MCF 10A (cell line): ENCODE measurements at regions of chr1 and their contacts with region 1.

Region 1: GRCh38 chr1:208245185-208245705 is 1.1 kb upstream of the PLXNA2 start:
- DNase-seq: peak; percentile 98
- H3K4me3 Mint-ChIP-seq: peak overlapping the region; percentile 94
- H3K27ac Mint-ChIP-seq: no peak overlapping the region
- H3K4me1 Mint-ChIP-seq: peaks cover 26% of the 10 kb centered on the region
- H3K27me3 Mint-ChIP-seq: no peaks in the 10 kb centered on the region
- CTCF ChIP-seq: peak; percentile 94

Region 2: GRCh38 chr1:208007938-208008342 is 237.3 kb before region 1 on chr1:
- CTCF ChIA-PET with region 1: interaction called, 15 read pairs
- POLR2A ChIA-PET with region 1: interaction called, 8 read pairs
- intact Hi-C with region 1: no loop called
- DNase-seq: peak; percentile 82
- H3K4me3 Mint-ChIP-seq: no peak overlapping the region
- H3K27ac Mint-ChIP-seq: no peak overlapping the region
- H3K4me1 Mint-ChIP-seq: peaks cover 18% of the 10 kb centered on the region
- H3K27me3 Mint-ChIP-seq: no peaks in the 10 kb centered on the region
- CTCF ChIP-seq: no peak

Region 3: DNA sequence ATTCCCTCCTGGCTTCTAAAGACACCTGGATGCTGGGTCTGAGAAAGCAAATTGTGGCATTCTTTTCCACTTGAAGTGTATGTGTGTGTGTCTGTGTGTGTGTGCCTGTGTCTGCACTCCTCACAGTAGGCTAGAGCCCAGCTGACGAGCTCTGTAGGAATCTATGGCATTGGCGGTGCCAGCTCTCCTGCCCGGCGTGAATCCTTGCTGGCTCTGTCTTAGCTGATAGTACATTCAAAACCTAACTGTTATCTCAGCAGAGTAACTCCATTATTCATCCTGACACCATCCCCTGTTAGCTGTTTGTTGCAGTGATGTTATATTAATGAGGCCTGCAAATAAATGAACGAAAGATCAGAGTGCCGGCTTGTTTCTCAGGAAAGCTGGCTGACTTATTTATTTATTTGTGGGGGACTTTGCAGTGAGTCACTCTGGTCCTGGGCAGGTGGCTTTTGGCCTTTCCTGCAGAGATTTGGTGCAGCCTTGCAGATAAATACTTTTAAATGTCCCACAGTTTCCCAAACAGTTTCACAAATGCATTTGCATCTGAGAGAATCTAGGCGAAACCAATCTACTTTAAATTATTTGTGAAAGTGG is 173.7 kb before region 1 on chr1:
- CTCF ChIA-PET with region 1: interaction called, 18 read pairs
- POLR2A ChIA-PET with region 1: interaction called, 4 read pairs
- intact Hi-C with region 1: no loop called
- DNase-seq: no peak
- H3K4me3 Mint-ChIP-seq: no peak overlapping the region
- H3K27ac Mint-ChIP-seq: no peak overlapping the region
- H3K4me1 Mint-ChIP-seq: no peaks in the 10 kb centered on the region
- H3K27me3 Mint-ChIP-seq: no peaks in the 10 kb centered on the region
- CTCF ChIP-seq: no peak

Region 4: DNA sequence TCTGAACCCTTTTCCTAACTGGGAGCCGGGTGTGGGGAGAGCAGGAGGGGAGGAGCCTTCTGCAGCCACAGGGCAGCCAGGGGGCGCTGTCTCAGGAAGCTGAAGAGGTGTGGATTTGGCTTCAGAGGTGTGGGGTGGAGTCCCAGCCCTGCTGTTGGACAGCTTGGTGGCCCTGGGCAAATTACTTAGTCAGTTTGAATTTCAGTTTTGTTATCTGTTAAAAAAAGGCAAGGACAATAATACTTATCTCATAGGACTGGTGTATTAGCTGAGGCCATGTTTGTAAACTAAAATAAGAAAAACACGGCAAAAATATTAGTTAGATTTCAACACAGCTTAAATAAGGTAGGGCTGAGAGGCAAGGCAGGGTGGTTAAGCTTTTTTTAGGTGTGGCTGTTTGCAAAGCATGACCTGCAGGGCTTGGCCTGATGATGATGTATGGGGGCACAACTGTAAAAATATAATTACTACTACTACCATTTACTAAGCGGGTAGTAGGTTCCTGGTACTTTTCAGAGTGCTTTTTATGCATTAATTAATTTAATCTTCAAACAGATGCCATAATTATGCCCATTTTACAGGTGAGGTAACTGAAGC is 112.9 kb before region 1 on chr1:
- CTCF ChIA-PET with region 1: interaction called, 586 read pairs
- POLR2A ChIA-PET with region 1: interaction called, 84 read pairs
- intact Hi-C with region 1: loop called (anchors 1 kb)
- DNase-seq: peak; percentile 96
- H3K4me3 Mint-ChIP-seq: peak overlapping the region; percentile 12
- H3K27ac Mint-ChIP-seq: peak overlapping the region; percentile 74
- H3K4me1 Mint-ChIP-seq: peaks cover 31% of the 10 kb centered on the region
- H3K27me3 Mint-ChIP-seq: no peaks in the 10 kb centered on the region
- CTCF ChIP-seq: peak; percentile 99

Region 5: DNA sequence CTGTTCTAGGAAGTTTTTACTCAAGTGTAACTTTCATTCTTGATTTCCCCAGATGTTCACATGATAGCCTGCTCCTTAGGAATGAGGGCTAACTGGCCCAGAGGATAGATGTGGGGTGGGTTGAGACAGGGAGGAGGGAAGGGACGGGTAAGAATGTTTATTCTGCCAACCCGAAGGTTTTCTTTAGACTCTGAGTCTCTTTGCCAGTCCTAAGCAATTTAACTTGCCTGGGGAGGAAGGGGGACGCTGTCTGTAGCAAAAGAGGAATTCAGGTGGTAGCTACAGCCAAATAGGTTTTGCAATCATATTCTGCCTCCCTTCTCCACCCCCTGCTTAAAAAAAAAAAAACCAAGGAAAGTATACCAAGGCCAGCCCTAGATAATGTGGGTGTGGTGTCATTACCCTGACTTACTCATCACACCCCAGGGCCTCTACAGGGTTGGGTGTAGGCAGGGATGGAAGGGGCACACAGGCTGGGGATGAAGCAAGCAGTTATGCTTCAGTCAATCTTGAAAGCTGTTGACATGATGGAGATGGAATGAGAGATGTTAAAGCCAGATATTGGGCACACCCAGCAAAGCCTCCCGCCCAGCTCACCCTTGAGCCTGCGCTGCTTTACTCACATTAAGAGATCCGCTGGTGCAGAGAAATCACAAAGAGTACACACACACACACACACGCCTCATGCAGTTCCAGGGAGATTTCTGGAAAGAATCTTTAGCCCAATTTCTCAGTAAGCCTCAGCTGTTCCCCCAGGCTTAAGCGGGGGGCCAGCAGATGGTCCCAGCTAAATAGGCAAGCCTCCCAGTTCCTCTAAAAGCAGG is 60.9 kb before region 1 on chr1:
- CTCF ChIA-PET with region 1: interaction called, 1,037 read pairs
- POLR2A ChIA-PET with region 1: interaction called, 87 read pairs
- intact Hi-C with region 1: no loop called
- DNase-seq: peak; percentile 100
- H3K4me3 Mint-ChIP-seq: peak overlapping the region; percentile 58
- H3K27ac Mint-ChIP-seq: peak overlapping the region; percentile 78
- H3K4me1 Mint-ChIP-seq: peaks cover 61% of the 10 kb centered on the region
- H3K27me3 Mint-ChIP-seq: no peaks in the 10 kb centered on the region
- CTCF ChIP-seq: no peak

Region 6: DNA sequence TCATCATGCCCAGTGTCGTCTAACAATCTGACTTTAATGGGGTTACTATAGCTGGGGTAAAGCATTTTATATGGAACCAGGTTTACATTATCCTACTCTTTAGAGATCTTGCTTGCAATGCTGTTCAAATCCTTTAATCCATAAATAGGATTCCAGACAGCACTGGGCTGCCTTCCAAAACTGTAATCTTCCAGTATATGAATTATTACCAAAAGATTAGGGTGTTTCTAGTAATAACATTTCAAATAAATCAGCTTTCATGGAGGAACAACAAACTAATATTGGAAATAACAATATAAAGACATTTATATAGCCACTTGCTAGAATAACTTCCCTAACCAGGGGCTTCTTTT is 87.5 kb after region 1 on chr1:
- CTCF ChIA-PET with region 1: no interaction called
- POLR2A ChIA-PET with region 1: no interaction called
- intact Hi-C with region 1: no loop called
- DNase-seq: no peak
- H3K4me3 Mint-ChIP-seq: no peak overlapping the region
- H3K27ac Mint-ChIP-seq: no peak overlapping the region
- H3K4me1 Mint-ChIP-seq: no peaks in the 10 kb centered on the region
- H3K27me3 Mint-ChIP-seq: peaks cover 81% of the 10 kb centered on the region
- CTCF ChIP-seq: no peak

Region 7: DNA sequence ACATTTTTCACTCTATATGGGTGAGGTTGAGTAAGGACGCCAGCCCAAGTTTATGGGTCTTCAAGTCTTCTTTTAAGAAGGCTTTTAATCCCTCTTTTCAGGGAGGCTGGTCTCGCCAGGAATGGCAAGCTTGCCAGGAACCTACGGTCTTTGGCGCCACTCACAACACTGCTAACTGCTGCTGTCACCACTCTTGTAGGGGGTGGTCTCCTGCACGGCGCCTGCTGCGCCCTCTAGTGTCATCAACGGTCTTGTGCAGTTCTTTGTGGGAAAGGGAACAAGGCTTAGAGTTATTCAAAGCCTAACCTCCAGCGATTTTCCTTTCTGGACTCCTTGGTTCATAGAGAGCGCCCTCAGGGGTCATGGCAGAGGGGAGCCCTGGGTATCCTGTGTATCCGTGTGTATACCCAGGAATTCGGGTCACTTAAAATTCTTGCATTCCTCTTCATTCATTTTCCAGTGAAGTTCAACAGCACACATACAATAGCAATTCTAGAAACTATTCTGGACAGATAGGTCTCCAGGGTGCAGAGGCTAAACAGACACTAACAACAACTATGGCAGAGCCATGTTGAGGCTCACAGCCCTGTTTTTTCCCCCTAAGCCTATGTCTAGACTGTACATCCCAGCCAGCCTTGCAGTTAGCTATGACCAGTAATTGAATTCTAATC is 945.5 kb after region 1 on chr1:
- CTCF ChIA-PET with region 1: interaction called, 4 read pairs
- POLR2A ChIA-PET with region 1: no interaction called
- intact Hi-C with region 1: loop called (anchors 1 kb)
- DNase-seq: peak; percentile 85
- H3K4me3 Mint-ChIP-seq: no peak overlapping the region
- H3K27ac Mint-ChIP-seq: no peak overlapping the region
- H3K4me1 Mint-ChIP-seq: no peaks in the 10 kb centered on the region
- H3K27me3 Mint-ChIP-seq: no peaks in the 10 kb centered on the region
- CTCF ChIP-seq: peak; percentile 96